Panc1 (cell line): ENCODE measurements at regions of chr1 and their contacts with region 1.

Region 1: DNA sequence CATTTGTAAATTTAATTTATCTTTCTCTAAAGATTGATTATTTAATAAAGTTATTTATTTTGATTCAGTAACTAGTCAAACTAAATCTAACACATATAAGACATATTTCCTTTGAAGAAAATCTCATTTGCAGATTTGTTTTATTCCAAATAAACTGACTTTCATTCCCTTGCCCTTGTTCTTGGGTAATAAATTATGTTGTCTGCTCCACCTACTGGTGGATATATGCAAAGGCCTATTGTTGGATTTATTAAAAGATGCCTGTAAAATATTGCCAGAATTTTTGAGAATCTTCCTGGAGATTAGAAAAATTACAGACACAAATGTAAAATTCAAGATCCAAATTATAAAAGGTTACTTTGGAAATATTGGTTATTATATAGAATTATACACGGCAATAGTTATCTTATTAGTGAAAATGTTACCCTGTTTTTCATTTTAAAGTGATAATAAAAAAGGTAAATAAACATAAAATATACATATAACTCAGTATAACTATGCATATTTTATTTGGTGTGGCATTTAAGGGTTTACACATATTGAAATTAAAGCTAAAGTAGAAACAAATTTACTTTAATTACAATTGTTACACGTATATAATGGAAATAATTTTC is 116.1 kb downstream of the SPATA17 start:
- DNase-seq: peak; percentile 4
- ATAC-seq: no peak; the same call in 1 of the 2 replicates
- H3K4me3 ChIP-seq: no peak overlapping the region
- H3K27ac ChIP-seq: no peak overlapping the region
- H3K4me1 ChIP-seq: no peaks in the 10 kb centered on the region
- H3K27me3 ChIP-seq: no peaks in the 10 kb centered on the region
- CTCF ChIP-seq: peak; percentile 80; the same call in 1 of the 2 replicates

Region 2: DNA sequence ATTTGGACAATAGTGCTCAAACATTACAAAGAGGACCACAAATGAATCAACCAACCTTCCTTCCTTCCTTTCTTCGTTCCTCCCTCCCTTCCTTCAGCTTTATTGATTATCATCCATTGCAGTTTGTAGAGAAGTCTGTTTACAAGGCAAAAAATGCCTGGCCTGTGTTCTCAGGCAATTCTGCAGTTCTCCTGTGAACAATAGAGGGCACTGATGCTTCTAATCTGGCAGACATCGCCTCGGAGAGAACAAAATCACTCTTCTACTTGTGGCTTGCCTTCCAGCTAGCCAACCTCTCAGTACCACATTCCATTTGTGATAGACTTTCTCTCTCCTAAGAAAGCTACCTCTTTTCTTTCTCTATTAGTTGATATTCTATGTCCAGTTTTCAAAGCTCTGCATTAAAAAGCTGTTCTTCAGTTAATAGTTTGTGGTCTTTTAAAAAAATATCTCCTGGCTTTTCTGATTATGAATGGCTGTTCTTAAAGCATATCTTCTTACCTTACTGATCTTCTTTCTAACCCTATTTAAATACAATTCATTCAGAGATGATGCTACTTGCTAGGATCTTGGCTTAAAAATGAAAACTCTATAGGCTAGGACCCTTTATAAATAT is 997.1 kb before region 1 on chr1:
- CTCF ChIA-PET with region 1: no interaction called
- POLR2A ChIA-PET with region 1: no interaction called
- in situ Hi-C with region 1: no loop called
- intact Hi-C with region 1: loop called (anchors 10 kb)
- DNase-seq: peak; percentile 17
- ATAC-seq: no peak
- H3K4me3 ChIP-seq: no peak overlapping the region
- H3K27ac ChIP-seq: no peak overlapping the region
- H3K4me1 ChIP-seq: no peaks in the 10 kb centered on the region
- H3K27me3 ChIP-seq: no peaks in the 10 kb centered on the region; the same call in 1 of the 2 replicates
- CTCF ChIP-seq: peak; percentile 78

Region 3: DNA sequence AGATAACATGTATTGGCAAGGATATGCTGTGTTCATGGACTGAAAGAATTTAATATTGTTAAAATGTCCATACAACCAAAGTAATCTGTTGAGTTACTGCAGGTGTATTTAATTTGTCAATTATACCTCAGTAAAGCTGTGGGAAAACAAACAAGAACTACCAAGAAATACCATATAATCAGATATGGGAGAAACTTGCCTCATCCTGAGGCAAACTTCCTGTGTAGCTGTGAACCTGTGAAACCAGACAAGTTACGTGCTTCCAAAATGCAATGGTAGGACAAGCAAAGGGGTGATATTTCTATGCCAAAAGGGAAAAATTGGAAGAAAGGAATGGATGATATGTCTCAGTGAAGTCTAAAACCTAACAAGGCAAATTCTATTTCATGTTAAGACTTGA is 58.5 kb after region 1 on chr1:
- CTCF ChIA-PET with region 1: no interaction called
- POLR2A ChIA-PET with region 1: no interaction called
- in situ Hi-C with region 1: no loop called
- intact Hi-C with region 1: no loop called
- DNase-seq: no peak
- ATAC-seq: no peak
- H3K4me3 ChIP-seq: no peak overlapping the region
- H3K27ac ChIP-seq: no peak overlapping the region
- H3K4me1 ChIP-seq: no peaks in the 10 kb centered on the region
- H3K27me3 ChIP-seq: no peaks in the 10 kb centered on the region
- CTCF ChIP-seq: no peak

Region 4: DNA sequence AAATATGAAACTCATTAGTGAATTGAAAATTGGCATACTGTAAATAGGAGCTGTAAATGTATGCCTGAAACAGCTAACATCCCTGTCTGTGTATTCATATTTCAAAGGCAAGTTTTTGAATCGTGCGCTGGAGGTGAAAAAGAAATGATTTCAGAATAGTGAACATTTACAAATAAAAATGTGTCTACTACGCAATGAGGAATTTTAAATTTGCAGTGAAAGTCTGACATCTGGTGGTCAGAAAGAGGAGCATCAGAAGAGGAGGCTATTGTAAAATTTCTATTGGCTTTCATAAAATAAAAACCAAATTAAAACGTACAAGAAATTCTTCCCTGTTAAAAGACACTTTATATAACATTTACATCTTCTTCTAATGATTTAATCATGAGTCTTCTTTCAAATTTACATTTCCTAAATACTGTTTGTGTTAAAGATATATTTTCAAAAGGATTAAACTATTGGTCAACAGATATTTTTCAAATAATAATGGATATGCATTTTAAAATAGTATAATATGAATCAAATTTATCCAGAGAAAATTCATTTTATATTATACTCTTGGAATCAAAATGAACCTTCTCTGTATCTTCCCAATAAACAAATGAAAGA is 424.1 kb after region 1 on chr1:
- CTCF ChIA-PET with region 1: no interaction called
- POLR2A ChIA-PET with region 1: no interaction called
- in situ Hi-C with region 1: no loop called
- intact Hi-C with region 1: loop called (anchors 5 kb)
- DNase-seq: peak; percentile 38
- ATAC-seq: no peak
- H3K4me3 ChIP-seq: no peak overlapping the region
- H3K27ac ChIP-seq: no peak overlapping the region
- H3K4me1 ChIP-seq: no peaks in the 10 kb centered on the region
- H3K27me3 ChIP-seq: peaks cover 13% of the 10 kb centered on the region
- CTCF ChIP-seq: peak; percentile 75; the same call in 1 of the 2 replicates